ENCODE measurements at regions of chr5 and their contacts with region 1.

Region 1: DNA sequence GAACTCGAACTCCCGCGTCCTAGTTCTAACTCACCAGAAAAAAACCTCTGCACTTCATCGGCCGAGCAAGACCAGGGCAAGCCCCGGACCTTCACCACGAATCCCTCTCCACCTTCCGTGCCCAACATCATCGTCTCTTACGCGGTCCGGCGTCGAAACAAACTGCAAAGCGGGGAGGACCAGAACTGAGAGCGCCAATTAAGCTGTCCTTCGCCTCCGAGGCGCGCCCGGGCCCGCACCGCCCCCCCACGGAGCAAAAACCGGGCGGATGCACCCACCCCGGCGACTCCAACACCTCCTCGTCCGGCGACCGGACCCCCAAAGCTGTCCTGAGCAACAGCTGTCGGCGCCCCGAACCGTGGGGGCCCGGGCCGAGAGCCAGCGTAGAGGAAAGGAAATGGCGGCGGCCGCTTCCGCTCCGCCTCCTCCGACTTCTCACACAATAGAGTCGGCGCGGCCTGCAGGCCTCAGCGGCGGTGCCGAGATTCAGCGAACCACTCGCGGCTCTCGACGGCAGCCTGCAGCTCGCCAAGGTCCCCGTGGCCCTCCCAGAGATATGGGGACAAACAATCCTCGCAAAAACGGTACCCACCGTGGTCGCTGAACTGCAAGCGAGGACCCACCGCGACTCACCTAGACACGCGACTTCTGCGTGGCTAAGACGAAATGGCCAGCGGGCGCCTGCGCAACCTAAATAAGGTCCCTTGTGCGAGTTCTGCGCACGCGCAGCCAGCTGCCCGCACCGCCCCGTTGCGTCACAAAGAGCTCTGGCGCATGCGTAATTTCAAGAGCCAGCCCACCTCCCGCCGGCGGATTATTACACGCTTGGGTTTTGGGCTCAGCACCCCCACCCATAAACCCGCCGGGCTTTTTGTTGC is at the start of gene HNRNPH1:
- DNase-seq: peak; percentile 92 to 99 (median 99)
- ATAC-seq: peak; percentile 70 to 75
- H3K4me3 Mint-ChIP-seq: peak within 1 kb of the TSS; percentile 94 to 99 (median 98)
- H3K27ac Mint-ChIP-seq: peak within 1 kb of the TSS; percentile 97 to 100 (median 99)
- H3K4me1 Mint-ChIP-seq: peaks cover 27 to 55% (median 48%) of the 10 kb centered on the region in 4 donors
- H3K27me3 Mint-ChIP-seq: no peaks in the 10 kb centered on the region
- polyA plus RNA-seq, gene HNRNPH1: 97.0 to 120 (median 104) TPM

Region 2: DNA sequence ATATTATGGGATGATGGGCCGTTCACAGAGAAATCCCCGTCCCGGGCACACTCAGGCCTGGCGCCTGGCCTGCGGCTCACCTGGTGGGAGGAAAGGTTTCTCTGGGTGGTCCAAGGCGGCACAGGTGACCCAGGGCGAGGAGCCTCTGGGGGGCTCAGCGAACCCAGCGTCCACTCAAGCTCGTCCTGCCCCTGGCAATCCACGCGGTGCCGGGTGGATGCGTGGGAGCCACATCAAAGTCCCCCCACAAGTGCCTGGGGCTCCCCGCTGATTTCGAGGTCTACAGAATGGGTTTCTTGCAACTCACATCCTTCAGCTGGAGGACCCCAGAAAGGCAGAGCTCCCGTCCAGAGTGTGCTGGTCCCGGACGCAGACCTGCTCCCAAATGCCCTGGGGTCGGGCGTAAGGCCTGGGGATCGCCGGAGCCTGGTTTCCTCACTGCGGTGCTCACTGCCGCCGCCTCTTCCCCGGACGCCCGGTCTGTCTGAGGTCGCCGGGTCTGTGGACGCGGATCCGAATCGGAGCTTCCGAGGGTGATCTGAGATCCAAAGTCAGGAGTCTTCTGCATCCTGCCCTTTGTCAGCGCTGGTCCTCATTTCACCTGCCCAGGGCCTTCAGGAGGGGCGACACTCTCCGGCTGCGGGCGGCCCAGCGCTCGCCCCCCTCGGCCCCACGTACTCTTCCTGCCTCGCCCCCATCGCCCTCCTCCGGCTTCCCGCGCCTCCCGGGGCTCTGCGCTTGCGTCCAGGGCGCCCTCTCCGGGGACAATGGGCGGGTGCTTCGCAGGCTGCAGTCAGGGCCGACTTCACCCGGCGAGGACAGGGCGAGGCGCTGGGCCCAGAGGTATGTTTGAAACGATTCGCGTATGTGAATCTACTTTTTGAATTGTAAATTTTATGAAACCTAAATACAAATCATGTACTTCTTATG is 92.9 kb before region 1 on chr5:
- POLR2A ChIA-PET with region 1: interaction called, 12 read pairs
- DNase-seq: peak; percentile 54 to 83 (median 68)
- ATAC-seq: peak; percentile 89 to 97
- H3K4me3 Mint-ChIP-seq: peak overlapping the region; percentile 66 to 85 (median 78)
- H3K27ac Mint-ChIP-seq: peak overlapping the region in 7 of 10 donors; percentile 29 to 82 (median 60)
- H3K4me1 Mint-ChIP-seq: peaks cover 3 to 31% (median 19%) of the 10 kb centered on the region in 4 donors
- H3K27me3 Mint-ChIP-seq: no peaks in the 10 kb centered on the region

Region 3: DNA sequence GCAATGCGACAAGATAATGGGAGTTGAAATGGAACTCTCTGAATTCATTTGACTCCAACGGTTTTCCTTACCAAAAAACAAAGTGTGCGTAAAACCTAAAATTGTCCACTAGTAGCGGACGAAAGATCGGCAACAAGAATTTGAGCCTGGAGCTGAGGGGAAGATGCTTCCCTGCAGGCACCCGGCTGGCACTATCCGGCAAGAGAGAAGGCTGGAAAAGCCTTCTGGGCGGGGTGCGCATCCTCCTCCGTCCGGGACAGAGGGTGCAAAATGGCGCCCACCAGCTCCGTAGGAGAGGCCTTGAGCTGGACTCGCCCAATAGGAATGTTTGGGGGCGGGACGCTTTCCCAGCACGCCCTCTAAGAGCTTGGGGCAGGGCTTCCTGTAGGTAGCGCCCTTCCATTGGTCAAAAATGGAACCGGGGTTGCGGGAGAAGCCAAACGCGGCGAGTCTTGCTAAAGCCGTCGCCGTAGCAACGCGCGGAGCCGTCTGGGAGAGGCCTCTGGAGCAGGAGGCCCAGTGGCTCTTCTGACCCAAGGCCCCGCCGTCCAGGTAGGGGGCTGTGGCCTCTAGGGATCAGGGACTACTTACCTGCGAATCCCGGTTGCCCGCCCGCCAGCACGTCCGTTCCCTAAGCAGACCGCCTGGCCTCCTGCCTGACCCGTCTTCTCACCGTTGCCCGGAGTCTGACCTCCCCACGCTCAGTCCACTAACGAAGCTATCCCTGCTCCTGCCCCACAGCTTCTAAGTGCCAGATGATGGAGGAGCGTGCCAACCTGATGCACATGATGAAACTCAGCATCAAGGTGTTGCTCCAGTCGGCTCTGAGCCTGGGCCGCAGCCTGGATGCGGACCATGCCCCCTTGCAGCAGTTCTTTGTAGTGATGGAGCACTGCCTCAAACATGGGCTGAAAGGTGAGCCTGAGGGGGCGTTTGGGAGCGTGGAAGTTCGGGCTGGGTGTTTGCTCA is 63.7 kb before region 1 on chr5:
- POLR2A ChIA-PET with region 1: interaction called, 58 read pairs
- DNase-seq: peak; percentile 75 to 94 (median 92)
- ATAC-seq: peak; percentile 99 to 100
- H3K4me3 Mint-ChIP-seq: peak overlapping the region; percentile 83 to 94 (median 92)
- H3K27ac Mint-ChIP-seq: peak overlapping the region; percentile 82 to 96 (median 92)
- H3K4me1 Mint-ChIP-seq: peaks cover 5 to 37% (median 21%) of the 10 kb centered on the region in 4 donors
- H3K27me3 Mint-ChIP-seq: no peaks in the 10 kb centered on the region

Region 4: GRCh38 chr5:179678223-179679013 is 55.2 kb after region 1 on chr5:
- POLR2A ChIA-PET with region 1: interaction called, 27 read pairs
- DNase-seq: peak; percentile 87 to 95 (median 92)
- ATAC-seq: peak; percentile 85 to 87
- H3K4me3 Mint-ChIP-seq: peak overlapping the region; percentile 94 to 100 (median 96)
- H3K27ac Mint-ChIP-seq: peak overlapping the region; percentile 93 to 99 (median 97)
- H3K4me1 Mint-ChIP-seq: peaks cover 17 to 50% (median 31%) of the 10 kb centered on the region in 4 donors
- H3K27me3 Mint-ChIP-seq: no peaks in the 10 kb centered on the region

Region 5: GRCh38 chr5:179732417-179732917 is 109.2 kb after region 1 on chr5 and contains the start of gene MAML1:
- POLR2A ChIA-PET with region 1: interaction called, 30 read pairs
- DNase-seq: peak; percentile 95 to 100 (median 99)
- ATAC-seq: peak; percentile 94 to 95
- H3K4me3 Mint-ChIP-seq: peak within 1 kb of the TSS; percentile 77 to 96 (median 94)
- H3K27ac Mint-ChIP-seq: peak within 1 kb of the TSS; percentile 91 to 97 (median 96)
- H3K4me1 Mint-ChIP-seq: peaks cover 9 to 50% (median 39%) of the 10 kb centered on the region in 4 donors
- H3K27me3 Mint-ChIP-seq: no peaks in the 10 kb centered on the region
- polyA plus RNA-seq, gene MAML1: 2.8 to 9.6 (median 3.3) TPM

Region 6: DNA sequence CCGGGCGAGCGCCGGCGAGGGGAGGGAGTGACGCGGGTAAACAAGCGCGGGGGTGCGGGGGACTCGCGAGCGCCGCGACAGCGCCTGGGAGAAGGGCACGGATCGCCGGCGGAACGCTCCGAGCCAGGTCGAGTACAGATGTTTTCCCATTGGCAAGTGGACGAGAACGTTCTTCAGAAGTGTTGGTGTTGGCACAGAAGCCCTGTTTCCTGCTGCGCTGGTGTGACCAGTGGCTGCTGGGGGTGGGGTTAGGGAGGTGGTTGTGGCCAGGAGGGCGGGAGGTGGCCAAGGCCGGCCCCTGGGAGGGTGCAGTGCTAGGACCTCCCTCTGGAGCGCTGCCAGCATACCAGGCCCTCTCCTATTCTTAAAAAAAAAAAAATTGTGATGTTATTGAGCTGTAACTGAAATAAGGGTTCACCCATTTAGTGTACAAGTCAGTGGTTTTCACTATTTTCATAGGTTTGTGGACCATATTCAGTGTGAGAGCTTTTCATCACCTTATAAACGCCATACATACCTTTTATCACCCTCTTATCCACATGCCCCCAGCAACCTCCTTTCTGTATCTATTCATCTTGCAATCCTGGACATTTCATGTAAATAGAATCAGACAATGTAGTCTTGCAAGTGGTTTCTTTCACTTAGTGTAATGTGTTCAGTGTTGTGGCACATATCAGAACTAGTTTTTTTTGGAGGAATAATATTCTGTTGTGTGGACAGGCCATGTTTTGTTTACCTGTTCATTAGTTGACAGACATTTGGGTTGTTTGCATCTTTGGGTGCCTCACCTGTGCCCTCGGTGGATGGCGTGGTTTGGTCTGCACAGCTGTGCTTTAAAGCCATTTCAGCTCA is 198.6 kb after region 1 on chr5:
- POLR2A ChIA-PET with region 1: interaction called, 30 read pairs
- DNase-seq: peak; percentile 82 to 94 (median 88)
- ATAC-seq: peak; percentile 57 to 68
- H3K4me3 Mint-ChIP-seq: peak overlapping the region; percentile 92 to 99 (median 95)
- H3K27ac Mint-ChIP-seq: peak overlapping the region; percentile 92 to 99 (median 98)
- H3K4me1 Mint-ChIP-seq: peaks cover 34 to 60% (median 60%) of the 10 kb centered on the region in 4 donors
- H3K27me3 Mint-ChIP-seq: peaks cover 0 to 2% (median 0%) of the 10 kb centered on the region in 5 donors

Region 7: GRCh38 chr5:180935203-180935602 is 1312.0 kb after region 1 on chr5:
- POLR2A ChIA-PET with region 1: no interaction called
- DNase-seq: no peak
- ATAC-seq: no peak
- H3K4me3 Mint-ChIP-seq: no peak overlapping the region
- H3K27ac Mint-ChIP-seq: no peak overlapping the region
- H3K4me1 Mint-ChIP-seq: no peaks in the 10 kb centered on the region
- H3K27me3 Mint-ChIP-seq: peaks cover 16 to 47% (median 30%) of the 10 kb centered on the region in 5 donors